ENCODE measurements at regions of chr7 and their contacts with region 1.

Region 1: DNA sequence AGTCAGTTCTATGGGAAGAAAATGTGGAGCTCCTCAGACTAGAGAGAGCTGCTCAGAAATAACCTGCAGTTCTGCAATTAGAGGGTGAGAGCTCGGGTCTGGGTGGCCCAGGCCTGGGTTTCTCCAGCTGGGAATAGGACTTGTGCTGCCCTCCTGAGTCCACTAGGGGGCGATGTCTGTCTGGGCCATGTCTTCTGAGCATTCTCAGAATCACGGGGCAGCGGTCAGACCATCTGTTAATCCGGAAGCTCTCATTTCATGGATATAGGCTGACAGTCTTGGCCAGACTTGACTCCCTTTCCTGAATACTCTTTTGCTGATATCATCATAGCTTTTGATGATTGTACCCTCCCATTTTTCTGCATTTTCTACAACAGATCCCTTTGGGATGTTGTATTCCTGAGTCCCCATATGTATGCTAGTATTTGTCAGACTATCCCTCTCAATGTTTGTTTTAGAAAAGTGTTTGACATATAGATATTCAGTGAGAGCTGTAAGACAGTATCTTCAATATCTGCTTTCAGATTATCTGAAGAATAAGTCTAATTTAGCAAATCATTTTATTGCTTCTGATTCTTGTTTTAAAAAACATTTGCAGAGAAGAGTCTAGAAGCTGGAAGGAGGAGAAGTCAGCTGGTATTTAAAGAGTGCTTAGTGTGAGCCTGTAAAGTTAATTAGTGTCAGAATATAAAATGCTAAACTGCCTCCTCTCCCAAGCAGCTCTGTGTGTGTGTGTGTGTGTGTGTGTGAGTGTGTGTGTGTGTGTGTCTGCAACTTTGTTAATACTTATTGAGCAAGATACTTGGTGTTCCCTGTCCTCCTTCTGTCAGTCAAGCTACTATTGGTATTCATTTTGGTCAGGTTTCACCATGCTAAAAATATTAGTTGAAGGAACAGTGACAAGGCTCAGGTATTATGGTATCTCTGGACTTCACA is 38.0 kb downstream of the STARD3NL start:
- DNase-seq: peak; percentile 68 to 78
- ATAC-seq: peak; percentile 95 to 98
- H3K4me3 ChIP-seq: no peak overlapping the region
- H3K27ac ChIP-seq: peak overlapping the region in 1 of 2 experiments; percentile 33; a peak in 3 of 6 replicates
- H3K4me1 ChIP-seq: peaks cover 27% of the 10 kb centered on the region
- CTCF ChIP-seq: peak; percentile 89
- EP300 ChIP-seq: no peak
- POLR2A ChIP-seq: no peak
- RAD21 ChIP-seq: peak; percentile 64 to 70

Region 2: DNA sequence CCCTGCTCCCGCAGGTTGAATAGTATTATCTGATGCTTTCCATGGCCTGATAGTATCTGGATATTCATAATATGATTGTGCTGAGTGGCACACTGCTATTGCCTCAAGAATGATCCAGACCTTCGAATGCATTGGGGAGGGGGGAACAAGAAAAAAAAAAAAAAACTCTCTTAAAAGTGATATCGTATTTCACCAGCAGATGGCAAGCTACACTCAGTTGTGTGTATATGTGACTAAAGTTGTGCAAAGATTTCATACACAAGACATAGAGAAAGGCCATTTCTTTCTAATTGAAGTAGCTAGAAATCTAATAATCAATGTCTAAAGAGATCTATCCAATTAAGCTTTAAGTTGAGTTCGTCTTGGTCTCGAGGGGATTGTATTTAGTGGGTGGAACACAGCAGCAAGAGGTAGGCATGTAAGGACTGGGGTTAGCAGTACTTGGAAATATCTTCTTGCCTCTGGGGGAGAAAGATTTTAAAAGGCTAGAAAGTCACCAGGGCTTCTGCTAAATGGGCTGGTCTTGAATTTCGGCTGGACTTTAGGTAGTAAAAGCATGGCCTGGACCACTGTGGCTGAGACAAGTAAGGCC is 314.7 kb before region 1 on chr7:
- CTCF ChIA-PET with region 1: interaction called, 47 read pairs
- POLR2A ChIA-PET with region 1: no interaction called
- DNase-seq: peak; percentile 51 to 83
- ATAC-seq: peak; percentile 78 to 81
- H3K4me3 ChIP-seq: peak overlapping the region; percentile 35
- H3K27ac ChIP-seq: peak overlapping the region; percentile 87 to 96
- H3K4me1 ChIP-seq: peaks cover 49% of the 10 kb centered on the region
- CTCF ChIP-seq: peak; percentile 88
- EP300 ChIP-seq: no peak
- POLR2A ChIP-seq: no peak
- RAD21 ChIP-seq: peak; percentile 89 to 92

Region 3: GRCh38 chr7:38107486-38107893 is 108.5 kb before region 1 on chr7:
- CTCF ChIA-PET with region 1: interaction called, 60 read pairs
- POLR2A ChIA-PET with region 1: no interaction called
- DNase-seq: peak; percentile 58 to 61
- ATAC-seq: peak; percentile 95 to 97
- H3K4me3 ChIP-seq: no peak overlapping the region
- H3K27ac ChIP-seq: no peak overlapping the region
- H3K4me1 ChIP-seq: no peaks in the 10 kb centered on the region
- CTCF ChIP-seq: peak; percentile 91
- EP300 ChIP-seq: no peak
- POLR2A ChIP-seq: no peak
- RAD21 ChIP-seq: peak; percentile 84 to 86

Region 4: DNA sequence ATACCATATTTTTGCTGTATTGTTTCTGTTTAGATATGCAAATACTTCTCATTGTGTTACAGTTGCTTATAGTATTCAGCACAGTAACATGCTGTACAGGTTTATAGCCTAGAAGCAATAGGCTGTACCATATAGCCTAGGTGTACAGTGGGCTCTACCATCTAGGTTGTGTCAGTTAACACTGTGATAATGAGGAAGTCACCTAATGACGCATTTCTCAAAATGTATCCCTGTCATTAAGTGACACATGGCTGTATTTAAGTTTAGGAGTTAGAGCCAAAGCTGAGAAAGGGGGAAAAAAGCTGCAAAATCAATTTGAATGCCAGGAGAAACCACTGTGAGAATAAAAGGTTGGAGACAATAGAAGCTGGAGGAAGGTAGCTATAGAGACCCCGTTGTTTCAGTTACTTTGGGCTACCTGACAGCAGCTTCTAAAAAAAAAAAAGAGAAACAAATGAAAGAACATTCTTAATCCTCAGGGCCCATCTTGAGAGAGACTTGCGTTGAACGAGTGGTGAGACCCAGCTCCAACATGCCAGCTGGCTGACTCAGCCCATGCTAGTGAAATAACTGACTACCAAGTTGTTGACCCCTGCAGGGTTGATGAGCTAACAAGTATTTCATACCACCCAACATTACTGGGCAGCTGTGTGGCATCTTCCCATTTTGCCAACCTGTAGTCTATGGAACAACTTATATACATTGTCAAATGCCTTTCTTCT is 29.2 kb before region 1 on chr7:
- CTCF ChIA-PET with region 1: interaction called, 12 read pairs
- POLR2A ChIA-PET with region 1: no interaction called
- DNase-seq: peak in 1 of 2 experiments; percentile 42
- ATAC-seq: peak; percentile 69 to 87; a peak in 5 of 6 replicates
- H3K4me3 ChIP-seq: no peak overlapping the region
- H3K27ac ChIP-seq: peak overlapping the region in 1 of 2 experiments; percentile 51; a peak in 2 of 6 replicates
- H3K4me1 ChIP-seq: peaks cover 35% of the 10 kb centered on the region
- CTCF ChIP-seq: no peak
- EP300 ChIP-seq: no peak
- POLR2A ChIP-seq: no peak
- RAD21 ChIP-seq: no peak

Region 5: GRCh38 chr7:38232502-38233366 is 16.7 kb after region 1 on chr7:
- CTCF ChIA-PET with region 1: interaction called, 11 read pairs
- POLR2A ChIA-PET with region 1: no interaction called
- DNase-seq: no peak
- ATAC-seq: no peak; a peak in 2 of 6 replicates
- H3K4me3 ChIP-seq: no peak overlapping the region
- H3K27ac ChIP-seq: no peak overlapping the region
- H3K4me1 ChIP-seq: no peaks in the 10 kb centered on the region
- CTCF ChIP-seq: no peak
- EP300 ChIP-seq: no peak
- POLR2A ChIP-seq: no peak
- RAD21 ChIP-seq: no peak

Region 6: GRCh38 chr7:38335492-38336147 is 119.6 kb after region 1 on chr7:
- CTCF ChIA-PET with region 1: interaction called, 11 read pairs
- POLR2A ChIA-PET with region 1: no interaction called
- DNase-seq: peak; percentile 56 to 89
- ATAC-seq: peak; percentile 98 to 100
- H3K4me3 ChIP-seq: no peak overlapping the region
- H3K27ac ChIP-seq: 0 out of 6 replicates have a peak overlapping the region, but pooled peaks of 1 of the 2 experiments have one; percentile 42
- H3K4me1 ChIP-seq: no peaks in the 10 kb centered on the region
- CTCF ChIP-seq: peak; percentile 89
- EP300 ChIP-seq: no peak
- POLR2A ChIP-seq: no peak
- RAD21 ChIP-seq: peak; percentile 60 to 63; a peak in 4 of 5 replicates

Region 7: DNA sequence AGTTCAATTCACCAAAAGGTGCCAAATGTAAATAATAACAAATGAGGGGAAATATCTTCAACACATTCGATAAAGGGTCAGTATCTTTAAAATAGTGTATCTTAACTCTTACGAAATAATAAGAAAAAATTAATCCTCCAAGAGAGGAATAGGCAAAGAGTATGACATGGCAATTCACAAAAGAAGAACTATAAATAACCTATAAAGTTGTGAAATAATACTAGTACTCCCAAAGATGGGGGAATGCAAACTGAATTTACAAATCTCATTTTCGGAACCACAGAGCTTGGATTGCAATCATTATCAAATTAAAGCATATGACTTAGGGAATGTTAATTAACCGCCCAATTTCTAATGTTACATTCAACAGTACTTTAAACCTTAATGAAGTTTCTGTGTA is 135.6 kb after region 1 on chr7:
- CTCF ChIA-PET with region 1: no interaction called
- POLR2A ChIA-PET with region 1: no interaction called
- DNase-seq: no peak
- ATAC-seq: no peak
- H3K4me3 ChIP-seq: no peak overlapping the region
- H3K27ac ChIP-seq: no peak overlapping the region
- H3K4me1 ChIP-seq: no peaks in the 10 kb centered on the region
- CTCF ChIP-seq: no peak
- EP300 ChIP-seq: no peak
- POLR2A ChIP-seq: no peak
- RAD21 ChIP-seq: no peak